ENCODE measurements at regions of chr1 and their contacts with region 1.

Region 1: GRCh38 chr1:53485478-53486394 is 26.5 kb downstream of the DMRTB1 start:
- DNase-seq: peak in 1 of 2 donors; percentile 80
- H3K4me3 ChIP-seq: no peak overlapping the region
- H3K27ac ChIP-seq: no peak overlapping the region
- H3K4me1 ChIP-seq: no peaks in the 10 kb centered on the region
- H3K27me3 ChIP-seq: no peaks in the 10 kb centered on the region
- CTCF ChIP-seq: peak; percentile 41 to 87 (median 80)

Region 2: GRCh38 chr1:53592521-53592982 is 106.8 kb after region 1 on chr1:
- intact Hi-C with region 1: loop called (anchors 10 kb)
- DNase-seq: no peak
- H3K4me3 ChIP-seq: no peak overlapping the region
- H3K27ac ChIP-seq: no peak overlapping the region
- H3K4me1 ChIP-seq: no peaks in the 10 kb centered on the region
- H3K27me3 ChIP-seq: no peaks in the 10 kb centered on the region
- CTCF ChIP-seq: no peak

Region 3: DNA sequence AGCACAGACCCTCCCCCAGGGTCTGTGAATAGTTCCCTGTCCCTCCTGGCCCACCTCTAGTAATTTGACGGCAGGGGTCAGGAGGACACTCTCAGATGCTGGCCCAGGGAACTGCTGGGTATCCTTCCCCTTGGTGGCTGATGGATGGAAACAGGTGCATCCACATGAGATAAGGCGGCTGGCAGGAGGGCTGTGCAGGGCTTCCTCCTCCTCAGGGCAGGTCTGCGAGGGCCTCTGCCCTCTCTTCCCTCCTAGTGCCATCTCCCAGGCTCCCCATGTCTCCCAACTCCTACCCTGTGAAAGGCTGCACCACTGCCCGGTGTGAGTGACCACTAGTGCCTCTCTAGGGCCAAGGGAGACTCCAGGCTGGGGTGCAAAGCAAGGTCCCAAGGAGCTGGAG is 129.4 kb after region 1 on chr1:
- intact Hi-C with region 1: no loop called
- DNase-seq: peak in 1 of 2 donors; percentile 49
- H3K4me3 ChIP-seq: no peak overlapping the region
- H3K27ac ChIP-seq: no peak overlapping the region
- H3K4me1 ChIP-seq: no peaks in the 10 kb centered on the region
- H3K27me3 ChIP-seq: no peaks in the 10 kb centered on the region
- CTCF ChIP-seq: no peak

Region 4: GRCh38 chr1:53681977-53682685 is 196.4 kb after region 1 on chr1:
- intact Hi-C with region 1: loop called (anchors 5 kb)
- DNase-seq: no peak
- H3K4me3 ChIP-seq: no peak overlapping the region
- H3K27ac ChIP-seq: no peak overlapping the region
- H3K4me1 ChIP-seq: no peaks in the 10 kb centered on the region
- H3K27me3 ChIP-seq: no peaks in the 10 kb centered on the region
- CTCF ChIP-seq: peak in 2 of 3 experiments; percentile 9 to 18

Region 5: GRCh38 chr1:53754484-53755312 is 269.0 kb after region 1 on chr1:
- intact Hi-C with region 1: loop called (anchors 1 kb)
- DNase-seq: no peak
- H3K4me3 ChIP-seq: no peak overlapping the region
- H3K27ac ChIP-seq: no peak overlapping the region
- H3K4me1 ChIP-seq: no peaks in the 10 kb centered on the region
- H3K27me3 ChIP-seq: no peaks in the 10 kb centered on the region
- CTCF ChIP-seq: peak; percentile 32 to 56 (median 44)

Measured in ascending aorta (tissue), 2 donors.